Calu3 (cell line): ENCODE measurements at regions of chr7 and their contacts with region 1.

Region 1: GRCh38 chr7:101058355-101058754 is 26.9 kb upstream of the TRIM56 start:
- DNase-seq: peak; percentile 20
- H3K4me3 Mint-ChIP-seq: no peak overlapping the region
- H3K27ac Mint-ChIP-seq: no peak overlapping the region
- H3K4me1 Mint-ChIP-seq: no peaks in the 10 kb centered on the region
- H3K27me3 Mint-ChIP-seq: peaks cover 46% of the 10 kb centered on the region
- CTCF ChIP-seq: no peak

Region 2: GRCh38 chr7:100896732-100897608 is 161.4 kb before region 1 on chr7:
- CTCF ChIA-PET with region 1: no interaction called
- intact Hi-C with region 1: loop called (anchors 1 kb)
- DNase-seq: peak; percentile 49
- H3K4me3 Mint-ChIP-seq: peak overlapping the region; percentile 71
- H3K27ac Mint-ChIP-seq: no peak overlapping the region
- H3K4me1 Mint-ChIP-seq: peaks cover 9% of the 10 kb centered on the region
- H3K27me3 Mint-ChIP-seq: peaks cover 23% of the 10 kb centered on the region
- CTCF ChIP-seq: peak; percentile 70

Region 3: DNA sequence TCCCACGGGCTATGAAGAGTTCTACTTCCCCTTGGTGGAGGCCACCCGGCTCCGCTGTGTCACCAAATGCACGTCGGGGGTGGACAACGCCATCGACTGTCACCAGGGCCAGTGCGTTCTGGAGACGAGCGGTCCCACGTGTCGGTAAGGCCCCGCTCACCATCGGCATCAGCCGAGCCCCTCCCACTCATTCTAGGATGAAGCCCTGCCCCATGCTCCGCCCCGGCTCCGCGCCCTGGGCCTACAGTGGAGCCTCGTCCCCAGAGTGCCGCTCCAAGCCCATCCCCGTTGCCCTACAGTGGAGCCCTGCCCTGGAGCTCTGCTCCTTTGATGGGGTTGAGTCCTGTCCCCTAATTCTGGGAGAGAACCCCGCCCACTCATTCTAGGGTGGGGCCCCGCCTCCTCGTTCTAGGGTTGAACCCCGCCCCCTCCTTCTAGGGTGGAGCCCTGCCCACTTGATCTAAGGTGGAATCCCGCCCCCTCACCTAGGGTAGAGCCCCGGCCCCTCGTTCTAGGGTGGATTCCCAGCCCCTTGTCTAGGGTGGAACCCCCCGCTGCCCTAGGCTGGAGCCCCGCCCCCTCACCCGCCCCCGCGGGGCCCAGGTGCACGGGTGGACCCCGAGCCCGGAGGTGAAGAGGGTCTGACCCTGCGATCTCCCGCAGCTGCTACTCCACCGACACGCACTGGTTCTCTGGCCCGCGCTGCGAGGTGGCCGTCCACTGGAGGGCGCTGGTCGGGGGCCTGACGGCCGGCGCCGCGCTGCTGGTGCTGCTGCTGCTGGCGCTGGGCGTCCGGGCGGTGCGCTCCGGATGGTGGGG is 92.4 kb before region 1 on chr7:
- CTCF ChIA-PET with region 1: no interaction called
- intact Hi-C with region 1: loop called (anchors 5 kb)
- DNase-seq: peak; percentile 88
- H3K4me3 Mint-ChIP-seq: peak overlapping the region; percentile 67
- H3K27ac Mint-ChIP-seq: peak overlapping the region; percentile 9
- H3K4me1 Mint-ChIP-seq: no peaks in the 10 kb centered on the region
- H3K27me3 Mint-ChIP-seq: peaks cover 61% of the 10 kb centered on the region
- CTCF ChIP-seq: peak; percentile 53

Region 4: DNA sequence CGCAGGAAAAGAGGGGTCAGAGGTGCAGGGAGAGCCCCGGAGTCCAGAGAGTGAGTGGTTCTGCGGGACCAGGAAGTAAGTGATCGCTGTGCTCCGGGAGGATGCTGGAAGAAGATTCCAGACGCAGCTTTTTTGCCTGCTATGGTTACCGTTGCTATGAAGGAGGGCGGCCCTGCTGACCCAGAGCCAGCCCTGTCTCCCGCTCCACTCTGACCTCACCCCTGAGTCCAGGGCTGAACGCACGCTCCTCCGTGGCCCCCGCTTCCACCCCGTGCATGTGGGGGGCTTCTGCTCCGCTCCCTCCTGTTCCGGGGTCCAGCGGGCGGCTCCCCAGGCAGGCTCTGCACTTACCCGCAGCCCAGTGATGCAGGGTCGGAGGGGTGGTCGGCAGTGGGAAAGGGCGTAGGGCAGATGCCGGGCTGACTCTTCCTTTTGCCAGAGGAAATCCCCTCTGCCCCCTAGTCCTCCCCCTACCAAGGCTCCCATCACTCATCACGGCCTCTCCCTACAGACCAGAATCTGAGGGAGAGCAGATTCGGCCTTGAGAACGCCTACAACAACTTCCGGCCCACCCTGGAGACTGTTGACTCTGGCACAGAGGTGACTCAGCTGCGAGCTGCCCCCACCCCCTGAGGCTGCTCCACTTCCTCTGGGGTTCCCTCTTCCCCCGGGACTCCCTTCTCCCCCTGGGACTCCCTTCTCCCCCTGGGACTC is 41.1 kb before region 1 on chr7:
- CTCF ChIA-PET with region 1: no interaction called
- intact Hi-C with region 1: no loop called
- DNase-seq: peak; percentile 77
- H3K4me3 Mint-ChIP-seq: peak overlapping the region; percentile 70
- H3K27ac Mint-ChIP-seq: peak overlapping the region; percentile 61
- H3K4me1 Mint-ChIP-seq: no peaks in the 10 kb centered on the region
- H3K27me3 Mint-ChIP-seq: peaks cover 13% of the 10 kb centered on the region
- CTCF ChIP-seq: no peak